ENCODE measurements at regions of chr2 and their contacts with region 1.

Region 1: DNA sequence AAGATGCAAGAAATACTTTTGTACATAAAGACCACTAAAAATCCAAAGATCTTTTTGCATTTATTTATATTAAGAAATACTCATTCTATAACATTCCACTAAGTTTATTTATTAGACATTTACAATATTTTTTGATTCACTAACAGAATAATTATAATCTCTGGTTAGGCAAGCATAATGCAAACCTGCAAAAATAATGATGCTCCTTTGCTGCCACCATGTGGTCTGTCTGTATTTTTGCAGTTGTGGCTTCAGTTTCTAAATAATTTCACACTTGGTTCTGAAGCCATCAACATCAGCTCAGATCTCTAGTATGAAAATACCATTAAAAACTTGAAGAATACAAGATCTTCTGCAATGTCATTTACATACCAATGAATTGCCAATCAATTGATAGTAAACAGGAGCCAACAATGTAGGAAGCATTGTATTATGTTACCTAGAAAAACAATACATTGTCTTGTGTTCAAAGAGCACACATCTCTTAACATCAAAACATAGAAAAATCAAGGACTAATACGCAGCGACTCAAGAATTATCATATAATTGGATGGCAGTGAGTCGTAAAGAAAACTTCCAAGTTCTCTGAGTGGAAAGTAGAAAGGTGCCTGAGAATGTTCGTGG is 28.8 kb upstream of the WDR75 start:
- DNase-seq: peak; percentile 56
- H3K4me3 Mint-ChIP-seq: no peak overlapping the region
- H3K27ac Mint-ChIP-seq: no peak overlapping the region
- H3K4me1 Mint-ChIP-seq: no peaks in the 10 kb centered on the region
- H3K27me3 Mint-ChIP-seq: no peaks in the 10 kb centered on the region
- CTCF ChIP-seq: no peak

Region 2: GRCh38 chr2:188524519-188525113 is 887.8 kb before region 1 on chr2:
- CTCF ChIA-PET with region 1: no interaction called
- intact Hi-C with region 1: loop called (anchors 2 kb)
- DNase-seq: peak; percentile 51
- H3K4me3 Mint-ChIP-seq: no peak overlapping the region
- H3K27ac Mint-ChIP-seq: no peak overlapping the region
- H3K4me1 Mint-ChIP-seq: peaks cover 4% of the 10 kb centered on the region
- H3K27me3 Mint-ChIP-seq: no peaks in the 10 kb centered on the region
- CTCF ChIP-seq: peak; percentile 62

Region 3: GRCh38 chr2:189096769-189097447 is 315.5 kb before region 1 on chr2:
- CTCF ChIA-PET with region 1: interaction called, 3 read pairs
- intact Hi-C with region 1: loop called (anchors 1 kb)
- DNase-seq: peak; percentile 12
- H3K4me3 Mint-ChIP-seq: no peak overlapping the region
- H3K27ac Mint-ChIP-seq: peak overlapping the region; percentile 19
- H3K4me1 Mint-ChIP-seq: peaks cover 20% of the 10 kb centered on the region
- H3K27me3 Mint-ChIP-seq: no peaks in the 10 kb centered on the region
- CTCF ChIP-seq: no peak

Region 4: GRCh38 chr2:189142893-189143759 is 269.3 kb before region 1 on chr2:
- CTCF ChIA-PET with region 1: interaction called, 9 read pairs
- intact Hi-C with region 1: loop called (anchors 1 kb)
- DNase-seq: peak; percentile 63
- H3K4me3 Mint-ChIP-seq: no peak overlapping the region
- H3K27ac Mint-ChIP-seq: no peak overlapping the region
- H3K4me1 Mint-ChIP-seq: no peaks in the 10 kb centered on the region
- H3K27me3 Mint-ChIP-seq: no peaks in the 10 kb centered on the region
- CTCF ChIP-seq: peak; percentile 94

Region 5: GRCh38 chr2:189305291-189305943 is 107.0 kb before region 1 on chr2:
- CTCF ChIA-PET with region 1: no interaction called
- intact Hi-C with region 1: loop called (anchors 5 kb)
- DNase-seq: no peak
- H3K4me3 Mint-ChIP-seq: no peak overlapping the region
- H3K27ac Mint-ChIP-seq: no peak overlapping the region
- H3K4me1 Mint-ChIP-seq: peaks cover 20% of the 10 kb centered on the region
- H3K27me3 Mint-ChIP-seq: no peaks in the 10 kb centered on the region
- CTCF ChIP-seq: no peak

Measured in Calu3 (cell line).